Ascending aorta (tissue), 2 donors: ENCODE measurements at regions of chr17 and their contacts with region 1.

Region 1: DNA sequence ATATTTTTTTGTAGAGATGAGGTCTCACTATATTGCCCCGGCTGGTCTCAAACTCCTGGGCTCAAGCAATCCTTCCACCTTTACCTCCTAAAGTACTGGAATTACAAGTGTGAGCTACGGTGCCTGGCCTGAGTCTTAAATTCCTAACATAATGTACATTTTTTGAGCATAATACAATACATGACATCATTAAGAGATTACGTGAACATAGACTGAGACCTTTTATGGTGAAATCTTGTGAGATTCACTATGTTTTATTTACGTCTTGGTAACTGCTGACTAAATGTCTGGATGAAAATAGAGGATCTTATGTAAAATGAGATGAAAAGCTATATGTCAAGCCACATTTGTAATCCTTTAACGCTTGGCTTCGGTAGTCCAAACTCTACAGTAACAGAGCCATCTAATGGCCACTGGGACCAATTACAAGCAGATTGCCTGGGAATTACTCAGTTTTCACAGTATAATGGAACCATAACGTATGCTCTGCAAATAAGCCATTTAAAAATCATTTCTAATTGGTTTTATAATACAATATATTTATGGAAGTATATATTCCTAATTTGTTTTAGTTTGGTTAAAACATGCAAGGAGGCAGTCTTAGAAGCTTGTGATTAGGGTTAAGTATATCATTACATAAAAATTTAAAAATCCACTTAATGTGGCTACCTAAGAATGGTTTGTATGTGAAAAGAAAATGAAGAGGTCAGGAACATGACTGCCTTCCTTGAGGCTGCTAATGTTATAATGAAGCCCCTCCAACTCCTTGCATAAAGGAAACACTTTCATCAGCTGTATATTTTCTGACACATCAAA is 8.1 kb upstream of the EFCAB13 start:
- DNase-seq: no peak
- H3K4me3 ChIP-seq: no peak overlapping the region
- H3K27ac ChIP-seq: peak overlapping the region; percentile 80 to 81
- H3K4me1 ChIP-seq: peaks cover 19 to 40% of the 10 kb centered on the region in 2 donors
- H3K27me3 ChIP-seq: no peaks in the 10 kb centered on the region
- CTCF ChIP-seq: peak; percentile 77 to 83 (median 79)

Region 2: DNA sequence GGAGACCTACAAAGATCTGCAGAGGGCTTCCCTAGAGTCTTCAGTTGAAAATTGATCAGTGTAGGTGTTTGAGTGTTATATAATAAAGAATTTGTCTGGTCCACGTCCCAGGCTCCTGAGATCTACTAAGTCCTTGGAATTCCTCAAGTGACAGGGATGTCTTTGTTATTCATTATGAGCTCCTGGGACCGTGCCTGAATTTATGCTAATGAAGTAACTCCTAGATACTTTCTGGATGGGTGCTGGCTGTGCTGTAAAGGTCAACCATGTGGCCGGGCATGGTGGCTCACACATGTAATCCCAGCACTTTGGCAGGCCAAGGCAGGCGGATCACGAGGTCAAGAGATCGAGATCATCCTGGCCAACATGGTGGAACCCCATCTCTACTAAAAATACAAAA is 170.3 kb before region 1 on chr17:
- intact Hi-C with region 1: loop called (anchors 5 kb)
- DNase-seq: no peak
- H3K4me3 ChIP-seq: no peak overlapping the region
- H3K27ac ChIP-seq: no peak overlapping the region
- H3K4me1 ChIP-seq: no peaks in the 10 kb centered on the region
- H3K27me3 ChIP-seq: no peaks in the 10 kb centered on the region
- CTCF ChIP-seq: no peak

Region 3: DNA sequence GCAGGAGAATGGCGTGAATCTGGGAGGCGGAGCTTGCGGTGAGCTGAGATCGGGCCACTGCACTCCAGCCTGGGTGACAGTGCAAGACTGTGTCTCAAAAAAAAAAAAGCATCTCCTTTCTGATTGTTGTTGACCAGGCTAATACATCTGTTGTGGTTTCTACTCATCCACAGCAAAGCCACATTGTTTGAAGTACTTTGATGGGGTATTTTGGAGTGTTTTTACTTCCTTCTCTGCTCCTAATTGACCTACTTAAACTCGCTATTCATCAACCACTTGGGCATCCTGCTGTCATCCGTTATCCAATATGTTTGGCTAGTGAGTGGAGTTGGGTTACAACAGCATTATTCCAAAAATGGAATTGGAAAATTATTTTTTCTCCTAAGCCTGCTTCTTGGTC is 123.1 kb before region 1 on chr17:
- intact Hi-C with region 1: no loop called
- DNase-seq: no peak
- H3K4me3 ChIP-seq: no peak overlapping the region
- H3K27ac ChIP-seq: no peak overlapping the region
- H3K4me1 ChIP-seq: peaks cover under 1 to 4% of the 10 kb centered on the region in 2 donors
- H3K27me3 ChIP-seq: no peaks in the 10 kb centered on the region
- CTCF ChIP-seq: no peak

Region 4: DNA sequence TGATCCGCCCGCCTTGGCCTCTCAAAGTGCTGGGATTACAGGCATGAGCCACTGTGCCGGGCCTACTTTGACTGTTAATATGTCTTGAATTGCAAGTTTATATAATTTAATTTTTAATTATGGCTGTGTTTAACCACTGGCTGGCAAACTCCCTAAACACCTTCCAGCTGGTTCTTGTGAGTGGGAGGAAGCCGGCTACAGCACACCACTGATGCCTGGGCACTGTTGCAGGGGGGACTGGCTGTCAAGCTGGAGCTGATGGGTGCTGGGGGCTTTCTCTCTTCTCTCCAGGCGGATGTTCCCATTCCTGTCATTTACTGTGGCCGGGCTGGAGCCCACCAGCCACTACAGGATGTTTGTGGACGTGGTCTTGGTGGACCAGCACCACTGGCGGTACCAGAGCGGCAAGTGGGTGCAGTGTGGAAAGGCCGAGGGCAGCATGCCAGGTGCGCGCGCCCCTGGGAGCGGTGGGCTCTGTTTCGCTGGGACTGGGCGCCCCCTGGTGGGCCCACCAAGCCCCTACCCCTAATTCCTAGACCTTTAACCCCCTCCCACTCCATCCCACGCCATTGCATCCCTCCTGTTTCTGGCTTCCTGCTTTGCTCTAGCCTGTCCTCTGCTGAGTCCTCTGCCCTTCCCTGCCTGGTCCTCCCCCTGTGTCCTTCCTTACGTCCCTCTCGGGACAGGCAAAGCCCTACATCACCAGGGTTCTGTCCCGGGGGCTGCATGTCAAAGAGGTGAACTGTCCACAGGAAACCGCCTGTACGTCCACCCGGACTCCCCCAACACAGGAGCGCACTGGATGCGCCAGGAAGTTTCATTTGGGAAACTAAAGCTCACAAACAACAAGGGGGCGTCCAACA is 426.9 kb after region 1 on chr17:
- intact Hi-C with region 1: no loop called
- DNase-seq: peak in 1 of 2 donors; percentile 45
- H3K4me3 ChIP-seq: no peak overlapping the region
- H3K27ac ChIP-seq: no peak overlapping the region
- H3K4me1 ChIP-seq: no peaks in the 10 kb centered on the region
- H3K27me3 ChIP-seq: peaks cover 6% of the 10 kb centered on the region
- CTCF ChIP-seq: no peak